Tibial artery (tissue), 4 donors: ENCODE measurements at regions of chr2 and their contacts with region 1.

Region 1: GRCh38 chr2:13006829-13007717 is 290.3 kb downstream of the TRIB2 start:
- DNase-seq: peak; percentile 38 to 65
- H3K4me3 ChIP-seq: no peak overlapping the region
- H3K27ac ChIP-seq: no peak overlapping the region
- H3K4me1 ChIP-seq: peaks cover 0 to 9% (median 4%) of the 10 kb centered on the region in 4 donors
- H3K27me3 ChIP-seq: peaks cover 0 to 7% of the 10 kb centered on the region in 2 donors
- CTCF ChIP-seq: peak; percentile 85 to 91

Region 2: GRCh38 chr2:11829947-11830707 is 1176.9 kb before region 1 on chr2:
- intact Hi-C with region 1: loop called (anchors 2 kb)
- DNase-seq: peak; percentile 62 to 81
- H3K4me3 ChIP-seq: peak overlapping the region; percentile 22 to 46
- H3K27ac ChIP-seq: peak overlapping the region; percentile 46 to 62
- H3K4me1 ChIP-seq: peaks cover 0 to 24% (median 13%) of the 10 kb centered on the region in 4 donors
- H3K27me3 ChIP-seq: no peaks in the 10 kb centered on the region
- CTCF ChIP-seq: peak in 1 of 2 experiments; percentile 4

Region 3: GRCh38 chr2:11863513-11864328 is 1143.4 kb before region 1 on chr2:
- intact Hi-C with region 1: loop called (anchors 5 kb)
- DNase-seq: peak; percentile 83 to 92
- H3K4me3 ChIP-seq: peak overlapping the region; percentile 10 to 34
- H3K27ac ChIP-seq: peak overlapping the region; percentile 18 to 32
- H3K4me1 ChIP-seq: peaks cover 0 to 6% (median 4%) of the 10 kb centered on the region in 4 donors
- H3K27me3 ChIP-seq: no peaks in the 10 kb centered on the region
- CTCF ChIP-seq: peak; percentile 92 to 93